WTC11 (cell line): ENCODE measurements at regions of chr1 and their contacts with region 1.

Region 1: DNA sequence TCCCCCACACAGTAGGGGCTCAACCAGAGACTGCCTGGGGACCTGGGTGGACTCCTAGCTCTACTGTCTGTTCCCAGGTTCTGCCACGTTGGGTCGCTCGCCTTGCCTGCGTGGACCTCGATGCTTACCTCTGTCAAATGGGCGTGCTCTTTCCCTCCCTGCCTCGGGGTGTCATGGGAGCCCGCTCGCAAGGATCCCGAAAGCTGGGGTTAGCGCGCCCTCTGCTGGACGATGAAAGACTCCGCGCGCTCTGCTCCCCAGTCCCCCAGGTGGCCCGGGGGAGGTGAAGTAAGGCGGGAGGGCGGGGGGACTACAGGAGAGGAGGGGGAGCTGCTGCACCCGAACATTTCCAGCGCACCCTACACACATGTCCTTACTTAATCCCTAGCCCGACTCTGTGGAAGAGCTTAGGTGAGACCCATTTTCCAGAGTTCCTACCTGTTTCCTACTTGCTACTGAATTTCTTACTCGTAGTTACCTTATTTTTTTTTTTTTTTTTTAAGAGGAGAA is 2.3 kb upstream of the BSND start:
- DNase-seq: peak; percentile 91
- ATAC-seq: peak; percentile 57
- H3K4me3 Mint-ChIP-seq: peak overlapping the region; percentile 63
- H3K27ac Mint-ChIP-seq: no peak overlapping the region
- H3K4me1 Mint-ChIP-seq: peaks cover 42% of the 10 kb centered on the region
- H3K27me3 Mint-ChIP-seq: peaks cover 57% of the 10 kb centered on the region
- CTCF ChIP-seq: peak; percentile 86

Region 2: GRCh38 chr1:54857741-54858627 is 138.4 kb before region 1 on chr1:
- CTCF ChIA-PET with region 1: no interaction called
- POLR2A ChIA-PET with region 1: no interaction called
- DNase-seq: no peak
- ATAC-seq: no peak
- H3K4me3 Mint-ChIP-seq: no peak overlapping the region
- H3K27ac Mint-ChIP-seq: peak overlapping the region; percentile 18; the same call in 1 of the 2 replicates
- H3K4me1 Mint-ChIP-seq: no peaks in the 10 kb centered on the region
- H3K27me3 Mint-ChIP-seq: no peaks in the 10 kb centered on the region
- CTCF ChIP-seq: no peak

Region 3: DNA sequence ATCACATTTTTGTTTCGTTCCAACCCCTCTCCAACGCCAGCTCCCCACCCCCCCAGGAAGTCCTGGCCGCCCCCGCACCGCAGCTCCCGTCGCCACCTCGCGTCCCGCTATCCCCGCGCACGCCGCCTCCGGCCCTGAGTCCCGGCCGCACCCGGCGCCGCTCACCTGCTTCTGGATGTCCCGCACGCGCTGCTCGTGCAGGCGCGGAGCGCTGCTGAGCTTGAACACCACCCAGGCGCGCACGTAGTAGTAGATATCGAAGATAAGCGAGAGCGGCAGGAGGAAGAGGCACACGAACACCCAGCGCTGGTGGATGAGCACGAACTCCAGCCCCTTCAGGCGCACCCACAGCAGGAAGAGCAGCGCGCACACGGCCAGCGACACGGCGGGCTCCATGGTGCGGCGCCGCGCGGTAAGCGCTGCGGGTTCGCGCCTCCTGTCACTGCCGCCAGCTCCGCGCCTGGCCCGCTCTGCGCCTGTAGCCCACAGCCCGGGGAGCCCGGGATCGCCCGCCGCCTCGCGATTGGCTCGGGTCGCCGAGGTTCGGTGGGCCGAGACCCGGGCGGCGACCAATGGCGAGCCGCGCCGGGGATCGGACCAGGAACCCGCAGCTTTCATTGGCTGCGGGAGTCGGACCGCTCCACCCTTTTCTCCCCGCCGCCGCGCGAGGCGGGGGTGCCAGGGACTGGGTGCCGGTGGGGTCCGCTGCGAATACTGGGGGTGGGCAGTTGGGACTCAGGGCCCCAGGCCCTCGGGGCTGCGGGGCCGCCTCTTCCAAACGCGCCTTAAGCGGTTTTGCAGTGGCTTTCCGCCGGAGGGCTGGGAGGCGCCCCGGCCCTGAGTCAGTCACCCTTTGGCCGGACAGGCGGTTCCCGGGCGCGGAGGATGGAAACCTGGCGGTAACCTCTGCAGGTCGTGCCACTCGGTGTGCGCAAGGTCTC is 109.4 kb before region 1 on chr1 and contains the start of gene DHCR24:
- CTCF ChIA-PET with region 1: interaction called, 23 read pairs
- POLR2A ChIA-PET with region 1: no interaction called
- DNase-seq: peak; percentile 86
- ATAC-seq: peak; percentile 91
- H3K4me3 Mint-ChIP-seq: peak within 1 kb of the TSS; percentile 95
- H3K27ac Mint-ChIP-seq: peak within 1 kb of the TSS; percentile 93
- H3K4me1 Mint-ChIP-seq: peaks cover 47% of the 10 kb centered on the region
- H3K27me3 Mint-ChIP-seq: no peaks in the 10 kb centered on the region
- CTCF ChIP-seq: no peak
- total RNA-seq, gene DHCR24: 300 to 337 TPM (median 336 TPM) in 3 replicates

Region 4: DNA sequence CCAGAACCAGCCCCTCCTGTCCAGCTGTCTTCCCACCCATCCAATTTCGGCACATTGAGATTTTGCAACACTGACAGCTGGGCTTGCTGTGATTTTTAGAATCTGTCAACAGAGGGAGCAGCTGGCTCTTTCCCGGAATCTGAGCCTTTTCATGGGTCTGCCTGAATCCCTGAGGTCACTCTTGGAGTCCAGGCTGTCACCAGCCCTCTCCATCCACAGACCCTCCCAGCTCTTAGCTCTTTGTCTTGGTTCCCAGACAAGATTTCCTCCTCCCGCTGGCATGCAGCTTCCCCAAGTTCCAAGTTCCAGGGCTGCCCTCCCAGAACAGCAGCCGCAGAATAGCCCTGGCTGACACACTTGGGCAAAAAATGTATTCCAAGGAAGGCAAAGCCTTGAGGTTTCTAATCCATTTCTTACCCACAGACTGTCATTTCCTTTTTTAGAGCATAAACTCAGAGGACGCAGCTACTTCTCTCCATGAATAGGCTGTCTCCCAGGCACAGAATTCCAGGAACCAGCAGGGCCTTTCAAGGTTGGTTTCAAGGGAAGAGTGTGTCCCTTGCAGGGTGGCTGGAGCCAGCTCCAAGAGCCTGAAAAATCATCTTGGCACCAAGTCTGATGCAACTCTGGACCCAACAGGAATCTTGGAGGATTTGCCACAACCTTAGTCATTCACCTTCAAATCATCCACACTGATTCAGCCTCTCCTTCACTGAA is 23.1 kb before region 1 on chr1:
- CTCF ChIA-PET with region 1: interaction called, 31 read pairs
- POLR2A ChIA-PET with region 1: no interaction called
- DNase-seq: no peak
- ATAC-seq: peak; percentile 90
- H3K4me3 Mint-ChIP-seq: no peak overlapping the region
- H3K27ac Mint-ChIP-seq: no peak overlapping the region
- H3K4me1 Mint-ChIP-seq: peaks cover 20% of the 10 kb centered on the region
- H3K27me3 Mint-ChIP-seq: peaks cover 6% of the 10 kb centered on the region
- CTCF ChIP-seq: no peak

Region 5: GRCh38 chr1:54980528-54981241 is 15.7 kb before region 1 on chr1 and contains the start of gene TMEM61:
- CTCF ChIA-PET with region 1: interaction called, 51 read pairs
- POLR2A ChIA-PET with region 1: no interaction called
- DNase-seq: peak; percentile 38
- ATAC-seq: peak; percentile 63
- H3K4me3 Mint-ChIP-seq: peak within 1 kb of the TSS; percentile 65
- H3K27ac Mint-ChIP-seq: no peak within 1 kb of the TSS
- H3K4me1 Mint-ChIP-seq: peaks cover 24% of the 10 kb centered on the region
- H3K27me3 Mint-ChIP-seq: peaks cover 31% of the 10 kb centered on the region
- CTCF ChIP-seq: no peak
- total RNA-seq, gene TMEM61: 0.41 to 0.74 TPM (median 0.44 TPM) in 3 replicates

Region 6: GRCh38 chr1:55007625-55008024 is 11.2 kb after region 1 on chr1:
- CTCF ChIA-PET with region 1: interaction called, 16 read pairs
- POLR2A ChIA-PET with region 1: no interaction called
- DNase-seq: no peak
- ATAC-seq: no peak
- H3K4me3 Mint-ChIP-seq: no peak overlapping the region
- H3K27ac Mint-ChIP-seq: no peak overlapping the region
- H3K4me1 Mint-ChIP-seq: peaks cover 18% of the 10 kb centered on the region
- H3K27me3 Mint-ChIP-seq: peaks cover 19% of the 10 kb centered on the region
- CTCF ChIP-seq: no peak

Region 7: DNA sequence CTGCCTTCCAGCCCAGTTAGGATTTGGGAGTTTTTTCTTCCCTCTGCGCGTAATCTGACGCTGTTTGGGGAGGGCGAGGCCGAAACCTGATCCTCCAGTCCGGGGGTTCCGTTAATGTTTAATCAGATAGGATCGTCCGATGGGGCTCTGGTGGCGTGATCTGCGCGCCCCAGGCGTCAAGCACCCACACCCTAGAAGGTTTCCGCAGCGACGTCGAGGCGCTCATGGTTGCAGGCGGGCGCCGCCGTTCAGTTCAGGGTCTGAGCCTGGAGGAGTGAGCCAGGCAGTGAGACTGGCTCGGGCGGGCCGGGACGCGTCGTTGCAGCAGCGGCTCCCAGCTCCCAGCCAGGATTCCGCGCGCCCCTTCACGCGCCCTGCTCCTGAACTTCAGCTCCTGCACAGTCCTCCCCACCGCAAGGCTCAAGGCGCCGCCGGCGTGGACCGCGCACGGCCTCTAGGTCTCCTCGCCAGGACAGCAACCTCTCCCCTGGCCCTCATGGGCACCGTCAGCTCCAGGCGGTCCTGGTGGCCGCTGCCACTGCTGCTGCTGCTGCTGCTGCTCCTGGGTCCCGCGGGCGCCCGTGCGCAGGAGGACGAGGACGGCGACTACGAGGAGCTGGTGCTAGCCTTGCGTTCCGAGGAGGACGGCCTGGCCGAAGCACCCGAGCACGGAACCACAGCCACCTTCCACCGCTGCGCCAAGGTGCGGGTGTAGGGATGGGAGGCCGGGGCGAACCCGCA is 43.1 kb after region 1 on chr1 and contains the start of gene PCSK9:
- CTCF ChIA-PET with region 1: interaction called, 14 read pairs
- POLR2A ChIA-PET with region 1: no interaction called
- DNase-seq: peak; percentile 71
- ATAC-seq: peak; percentile 68
- H3K4me3 Mint-ChIP-seq: peak within 1 kb of the TSS; percentile 86
- H3K27ac Mint-ChIP-seq: peak within 1 kb of the TSS; percentile 34; the same call in 1 of the 2 replicates
- H3K4me1 Mint-ChIP-seq: peaks cover 52% of the 10 kb centered on the region
- H3K27me3 Mint-ChIP-seq: peaks cover 52% of the 10 kb centered on the region
- CTCF ChIP-seq: no peak
- total RNA-seq, gene PCSK9: 47.9 to 73.2 TPM (median 49.3 TPM) in 3 replicates